Vagina (tissue), 2 donors: ENCODE measurements at regions of chr1 and their contacts with region 1.

Region 1: GRCh38 chr1:170284951-170285350 is 139.2 kb downstream of the NTMT2 start:
- DNase-seq: no peak
- H3K4me3 ChIP-seq: no peak overlapping the region
- H3K27ac ChIP-seq: no peak overlapping the region
- H3K4me1 ChIP-seq: peaks cover 5% of the 10 kb centered on the region
- H3K27me3 ChIP-seq: no peaks in the 10 kb centered on the region
- CTCF ChIP-seq: no peak
- POLR2A ChIP-seq: no peak

Region 2: DNA sequence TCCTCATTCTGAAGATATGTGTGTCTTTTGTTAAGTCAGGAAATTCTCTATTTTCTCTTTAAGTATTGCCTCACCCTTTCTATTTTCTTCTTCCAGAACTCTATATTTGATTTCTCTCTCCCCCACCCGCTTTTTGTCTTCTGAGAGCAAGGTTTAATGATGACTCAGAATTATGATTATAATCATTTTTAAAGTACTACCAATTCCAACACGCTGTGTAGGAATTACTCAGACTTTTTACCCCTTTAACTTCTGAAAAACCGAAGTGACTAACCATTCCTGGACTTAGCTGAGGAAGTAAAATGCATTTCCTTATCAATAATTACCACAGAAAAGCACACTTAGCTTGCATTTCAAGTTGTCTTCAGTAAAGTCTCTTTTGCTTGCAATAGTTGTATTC is 370.4 kb before region 1 on chr1:
- intact Hi-C with region 1: loop called (anchors 5 kb)
- DNase-seq: no peak
- H3K4me3 ChIP-seq: no peak overlapping the region
- H3K27ac ChIP-seq: no peak overlapping the region
- H3K4me1 ChIP-seq: no peaks in the 10 kb centered on the region
- H3K27me3 ChIP-seq: no peaks in the 10 kb centered on the region
- CTCF ChIP-seq: no peak
- POLR2A ChIP-seq: no peak